HEK293 (cell line): ENCODE measurements at regions of chr12 and their contacts with region 1.

Region 1: DNA sequence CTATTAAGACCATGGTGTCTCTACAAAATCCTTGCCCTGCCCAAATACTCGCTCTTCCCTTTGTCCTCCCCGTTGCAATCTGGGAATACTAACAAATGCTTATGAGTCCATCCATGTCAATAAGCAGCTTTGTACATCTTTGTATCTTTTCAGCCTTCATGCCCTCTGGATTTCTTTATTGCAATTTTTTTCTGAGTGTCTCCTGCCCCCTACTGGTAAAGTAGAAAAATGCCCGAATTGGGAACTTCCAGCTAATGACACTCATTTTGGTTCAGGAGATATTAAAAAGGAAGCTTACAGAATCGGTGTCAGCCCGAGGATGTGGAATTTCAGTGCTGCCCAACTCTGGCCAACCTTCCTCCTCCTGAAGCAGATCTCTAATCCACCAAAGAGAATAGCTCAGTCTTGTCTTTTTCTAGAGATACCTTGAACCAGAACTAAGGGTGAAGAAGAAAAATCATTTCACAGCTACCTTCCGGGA is 46.0 kb downstream of the SH2B3 start:
- H3K4me3 ChIP-seq: no peak overlapping the region
- H3K27ac ChIP-seq: no peak overlapping the region
- H3K4me1 ChIP-seq: no peaks in the 10 kb centered on the region
- CTCF ChIP-seq: peak; percentile 50; the same call in 1 of the 2 replicates

Region 2: DNA sequence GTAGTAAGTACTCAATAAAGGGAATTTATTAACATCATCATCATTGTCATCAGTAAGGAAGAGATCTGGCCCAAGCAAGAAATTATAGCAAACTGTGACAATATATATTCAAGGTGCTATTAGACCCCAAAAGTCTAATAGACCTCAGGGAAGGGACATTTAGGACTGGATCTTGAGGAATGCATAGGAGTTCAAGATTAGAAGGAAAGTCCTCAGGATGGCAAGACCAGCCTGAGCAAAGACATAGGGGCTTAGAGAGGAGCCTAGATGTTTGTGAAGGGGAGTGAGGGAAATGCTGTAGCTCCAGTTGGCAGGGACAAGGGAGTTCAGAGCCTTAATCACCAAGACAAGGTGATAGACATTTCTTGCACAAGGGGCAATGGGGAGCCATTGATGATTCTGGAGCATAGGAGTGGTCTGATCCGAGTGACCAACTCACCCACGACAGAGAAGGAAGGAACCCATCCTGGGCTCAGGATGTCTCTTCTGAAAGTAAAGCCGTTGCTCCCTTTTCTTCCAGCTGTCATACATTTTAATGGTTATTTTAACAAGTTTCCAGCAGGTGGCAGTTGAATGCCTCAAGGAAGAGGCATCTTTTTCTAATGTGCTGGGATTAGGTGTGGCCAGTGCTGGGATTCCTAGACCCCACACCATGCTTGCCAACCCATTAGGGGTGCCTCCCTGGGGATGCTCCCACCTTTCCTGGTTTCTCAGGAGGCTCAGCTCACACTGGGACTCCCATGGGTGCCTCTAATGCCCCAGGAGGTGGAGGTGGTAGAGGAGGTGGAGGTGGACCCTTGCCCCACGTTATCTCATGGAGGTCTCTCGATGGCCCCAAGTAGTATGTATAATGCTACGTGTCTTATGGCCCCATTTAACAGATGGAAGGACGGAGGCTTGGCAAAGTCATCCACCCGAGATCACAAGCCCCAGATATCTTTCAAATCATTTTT is 120.6 kb before region 1 on chr12:
- CTCF ChIA-PET with region 1: interaction called, 20 read pairs
- POLR2A ChIA-PET with region 1: no interaction called
- H3K4me3 ChIP-seq: no peak overlapping the region
- H3K27ac ChIP-seq: no peak overlapping the region
- H3K4me1 ChIP-seq: no peaks in the 10 kb centered on the region
- CTCF ChIP-seq: peak; percentile 52

Region 3: GRCh38 chr12:111405149-111405860 is 46.4 kb before region 1 on chr12:
- CTCF ChIA-PET with region 1: interaction called, 217 read pairs
- POLR2A ChIA-PET with region 1: no interaction called
- H3K4me3 ChIP-seq: peak overlapping the region; percentile 59
- H3K27ac ChIP-seq: peak overlapping the region; percentile 40; the same call in 1 of the 2 replicates
- H3K4me1 ChIP-seq: no peaks in the 10 kb centered on the region
- CTCF ChIP-seq: peak; percentile 98

Region 4: DNA sequence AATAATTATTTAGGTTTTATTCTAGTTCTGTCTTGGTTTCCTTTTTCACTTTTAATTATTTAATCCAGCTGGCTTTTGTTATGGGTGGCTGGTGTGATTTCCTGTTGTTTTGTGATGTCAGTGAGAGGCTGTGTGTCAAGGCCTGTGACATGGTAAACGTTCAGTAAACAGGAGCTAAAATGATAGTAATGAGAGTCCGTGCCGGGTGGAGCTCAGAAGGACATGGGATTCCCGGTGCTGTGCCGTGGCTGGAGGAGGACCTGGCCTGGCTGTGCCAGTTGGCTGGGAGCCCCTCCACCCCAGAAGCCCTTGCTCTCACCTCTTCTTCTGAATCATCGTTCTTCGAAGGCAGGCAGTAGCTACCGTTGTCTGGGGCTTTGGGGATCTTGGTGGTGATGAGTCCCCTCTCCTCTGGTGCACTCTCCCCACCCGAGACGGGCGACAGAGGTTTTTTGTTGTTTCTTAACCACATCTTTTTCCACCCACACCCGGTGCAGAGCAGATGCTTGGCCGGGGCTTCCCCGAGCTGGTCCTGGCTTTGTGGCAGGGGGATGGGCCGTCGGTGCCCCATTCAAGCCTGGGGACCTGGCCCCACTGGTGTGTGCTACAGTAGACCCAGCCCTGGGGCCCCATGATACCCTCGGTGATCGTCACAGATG is 16.9 kb before region 1 on chr12:
- CTCF ChIA-PET with region 1: interaction called, 27 read pairs
- POLR2A ChIA-PET with region 1: interaction called, 4 read pairs
- H3K4me3 ChIP-seq: no peak overlapping the region
- H3K27ac ChIP-seq: no peak overlapping the region
- H3K4me1 ChIP-seq: peaks cover 6% of the 10 kb centered on the region; the same call in 1 of the 2 replicates
- CTCF ChIP-seq: no peak

Region 5: DNA sequence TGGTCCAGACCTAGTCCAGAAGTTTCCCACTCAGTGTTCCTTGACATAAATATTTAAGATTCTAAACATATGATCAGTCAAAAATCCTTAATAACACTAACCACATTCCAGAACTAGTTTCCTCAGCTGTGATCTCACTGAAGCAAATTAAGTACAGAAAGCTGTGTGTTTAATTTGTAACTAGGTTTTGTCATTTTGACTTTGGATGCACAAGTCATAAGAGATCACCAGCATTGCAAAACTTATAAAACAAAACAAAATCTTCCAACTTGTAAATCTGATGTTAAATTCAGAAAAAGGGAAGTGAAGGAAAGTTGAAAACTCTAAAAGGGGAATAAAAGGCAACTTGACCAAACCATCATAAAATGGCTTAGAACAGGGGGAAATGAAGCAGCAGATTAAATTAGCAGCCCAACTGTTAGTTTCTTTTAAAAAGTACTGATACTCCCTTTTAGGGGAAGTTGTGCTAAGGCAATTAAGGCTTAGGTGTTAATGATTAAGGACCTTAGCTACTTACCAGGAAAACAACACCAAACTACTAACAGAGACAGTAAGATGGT is 10.6 kb after region 1 on chr12:
- CTCF ChIA-PET with region 1: interaction called, 31 read pairs
- POLR2A ChIA-PET with region 1: no interaction called
- H3K4me3 ChIP-seq: no peak overlapping the region
- H3K27ac ChIP-seq: no peak overlapping the region
- H3K4me1 ChIP-seq: no peaks in the 10 kb centered on the region
- CTCF ChIP-seq: no peak

Region 6: DNA sequence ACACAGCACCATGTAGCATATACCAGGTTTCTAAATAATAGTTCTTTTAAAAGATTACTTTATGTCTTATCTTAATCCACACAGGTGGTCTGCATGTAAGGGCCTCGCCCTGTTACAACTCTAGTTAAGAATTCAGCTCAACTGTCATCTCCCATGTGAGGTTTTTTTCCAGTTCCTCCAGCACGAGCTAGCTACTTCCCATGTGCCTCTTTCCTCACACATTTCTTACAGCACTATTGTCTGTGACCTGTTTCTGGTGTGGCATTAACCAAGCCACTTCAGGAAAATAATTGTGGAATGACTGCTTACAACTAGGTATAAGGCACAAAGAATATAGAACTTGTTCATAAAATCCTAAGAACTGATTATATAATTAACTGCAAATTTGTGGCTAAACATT is 19.5 kb after region 1 on chr12:
- CTCF ChIA-PET with region 1: interaction called, 14 read pairs
- POLR2A ChIA-PET with region 1: no interaction called
- H3K4me3 ChIP-seq: no peak overlapping the region
- H3K27ac ChIP-seq: no peak overlapping the region
- H3K4me1 ChIP-seq: no peaks in the 10 kb centered on the region
- CTCF ChIP-seq: no peak

Region 7: GRCh38 chr12:111529424-111530368 is 78.0 kb after region 1 on chr12:
- CTCF ChIA-PET with region 1: interaction called, 10 read pairs
- POLR2A ChIA-PET with region 1: no interaction called
- H3K4me3 ChIP-seq: no peak overlapping the region
- H3K27ac ChIP-seq: no peak overlapping the region
- H3K4me1 ChIP-seq: no peaks in the 10 kb centered on the region
- CTCF ChIP-seq: no peak

Region 8: GRCh38 chr12:111650912-111651311 is 199.2 kb after region 1 on chr12:
- CTCF ChIA-PET with region 1: no interaction called
- POLR2A ChIA-PET with region 1: no interaction called
- H3K4me3 ChIP-seq: no peak overlapping the region
- H3K27ac ChIP-seq: no peak overlapping the region
- H3K4me1 ChIP-seq: no peaks in the 10 kb centered on the region
- CTCF ChIP-seq: no peak